Dorsolateral prefrontal cortex (tissue), 120 donors: ENCODE measurements at regions of chr10 and their contacts with region 1.

Region 1: DNA sequence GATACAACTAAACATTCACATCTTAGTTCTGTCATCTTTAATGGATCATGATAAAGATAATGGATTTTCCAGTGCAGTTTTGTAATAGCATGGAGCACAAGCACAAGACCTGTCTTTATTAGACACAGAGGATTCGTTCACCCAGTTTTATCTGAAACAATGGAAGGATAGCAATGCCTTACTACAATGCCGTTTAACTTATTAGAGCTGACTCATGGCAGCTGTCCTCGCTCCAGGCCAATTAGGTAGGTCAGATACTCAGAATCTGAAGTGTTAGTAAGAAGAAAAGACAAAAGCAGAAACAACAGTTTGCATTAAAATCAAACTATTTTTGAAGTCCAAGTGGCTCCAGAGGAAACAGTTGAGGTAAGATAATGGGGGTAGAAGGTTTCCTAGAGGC is 12.8 kb downstream of the OR13A1 start:
- DNase-seq: no peak
- H3K4me3 ChIP-seq: no peak overlapping the region
- H3K27ac ChIP-seq: no peak overlapping the region
- H3K27me3 ChIP-seq: peaks cover 0 to 12% (median 0%) of the 10 kb centered on the region in 45 donors
- CTCF ChIP-seq: no peak

Region 2: GRCh38 chr10:45325116-45325515 is 22.5 kb after region 1 on chr10:
- intact Hi-C with region 1: no loop called
- DNase-seq: no peak
- H3K4me3 ChIP-seq: no peak overlapping the region
- H3K27ac ChIP-seq: no peak overlapping the region
- H3K27me3 ChIP-seq: no peaks in the 10 kb centered on the region
- CTCF ChIP-seq: no peak

Region 3: GRCh38 chr10:45476559-45476958 is 174.0 kb after region 1 on chr10:
- intact Hi-C with region 1: loop called in 1 of 2 experiments (anchors 5 kb)
- DNase-seq: no peak
- H3K4me3 ChIP-seq: no peak overlapping the region
- H3K27ac ChIP-seq: no peak overlapping the region
- H3K27me3 ChIP-seq: no peaks in the 10 kb centered on the region
- CTCF ChIP-seq: no peak